Transverse colon (tissue), 4 donors: ENCODE measurements at regions of chr16 and their contacts with region 1.

Region 1: DNA sequence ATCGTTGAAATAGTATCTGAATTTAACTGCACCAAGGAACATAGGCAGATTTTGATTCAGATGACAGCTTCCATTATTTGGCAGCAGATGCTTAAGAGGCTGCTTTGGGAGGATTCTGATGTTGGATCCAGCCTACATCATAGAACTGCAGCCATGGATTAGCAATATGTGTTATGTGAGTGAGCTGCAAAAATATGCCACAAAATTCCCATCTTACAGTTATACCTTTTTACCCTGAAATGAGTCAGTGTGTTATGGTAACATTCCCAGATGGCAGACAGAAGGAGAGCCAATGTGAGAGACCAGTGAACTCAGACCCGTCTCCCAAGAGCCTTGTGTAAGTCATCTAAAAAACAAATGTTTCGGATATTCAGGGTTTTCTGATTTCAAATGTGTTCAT is 206.1 kb downstream of the CDH13 start:
- DNase-seq: no peak
- H3K4me3 ChIP-seq: no peak overlapping the region
- H3K27ac ChIP-seq: no peak overlapping the region
- H3K4me1 ChIP-seq: no peaks in the 10 kb centered on the region
- H3K27me3 ChIP-seq: no peaks in the 10 kb centered on the region
- CTCF ChIP-seq: no peak
- EP300 ChIP-seq: no peak
- POLR2A ChIP-seq: no peak

Region 2: DNA sequence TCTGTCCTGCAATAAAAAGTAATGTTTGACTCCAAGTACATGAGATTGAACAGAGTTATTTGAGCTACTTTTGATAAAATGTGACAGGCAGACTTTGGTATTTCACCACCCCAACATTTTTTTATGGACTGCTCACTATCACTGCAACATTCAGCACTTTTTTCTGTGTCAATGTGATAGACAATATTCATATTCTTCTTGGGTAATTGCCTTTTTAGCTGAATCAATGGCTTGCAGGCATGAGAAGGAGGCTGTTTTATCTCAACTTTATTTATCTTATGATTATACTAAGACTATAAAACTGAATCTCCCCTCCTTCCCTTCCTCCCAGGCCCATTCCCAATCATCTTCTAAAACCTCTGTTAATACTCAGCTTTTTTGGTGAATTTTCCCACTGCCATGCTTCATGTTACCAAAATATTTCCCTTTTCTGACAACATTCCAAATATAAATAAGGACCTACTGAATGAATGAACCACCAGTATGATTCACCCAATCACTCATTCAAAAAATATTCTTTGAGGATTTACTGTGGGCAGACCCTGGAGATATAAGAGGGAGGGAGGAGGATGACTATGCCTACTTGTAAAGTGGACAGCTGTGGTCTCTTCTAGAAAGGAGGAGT is 138.5 kb before region 1 on chr16:
- in situ Hi-C with region 1: no loop called
- intact Hi-C with region 1: no loop called
- DNase-seq: no peak
- H3K4me3 ChIP-seq: no peak overlapping the region
- H3K27ac ChIP-seq: no peak overlapping the region
- H3K4me1 ChIP-seq: peaks cover 0 to 8% (median 0%) of the 10 kb centered on the region in 4 donors
- H3K27me3 ChIP-seq: no peaks in the 10 kb centered on the region
- CTCF ChIP-seq: no peak
- EP300 ChIP-seq: no peak
- POLR2A ChIP-seq: no peak

Region 3: DNA sequence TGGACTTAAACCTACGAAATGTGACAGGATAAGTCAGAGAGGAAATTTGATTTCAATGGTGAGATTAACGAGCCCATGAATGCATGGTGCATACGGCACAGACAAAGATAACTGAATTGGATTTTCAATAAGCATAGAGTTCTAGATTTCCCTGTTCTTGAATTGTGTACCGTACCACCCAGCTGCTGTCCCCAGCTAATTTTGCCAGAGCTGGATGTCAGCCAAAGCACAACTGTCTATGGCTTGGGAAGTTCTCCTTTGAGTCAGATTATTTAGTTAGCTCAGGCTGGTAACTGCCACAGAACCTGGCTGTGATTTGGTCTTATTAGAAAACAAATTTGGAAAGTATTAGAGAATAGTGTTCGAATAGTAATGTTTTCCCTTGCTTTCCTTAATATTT is 63.0 kb before region 1 on chr16:
- in situ Hi-C with region 1: no loop called
- intact Hi-C with region 1: no loop called
- DNase-seq: no peak
- H3K4me3 ChIP-seq: no peak overlapping the region
- H3K27ac ChIP-seq: no peak overlapping the region
- H3K4me1 ChIP-seq: no peaks in the 10 kb centered on the region
- H3K27me3 ChIP-seq: no peaks in the 10 kb centered on the region
- CTCF ChIP-seq: no peak
- EP300 ChIP-seq: no peak
- POLR2A ChIP-seq: no peak

Region 4: DNA sequence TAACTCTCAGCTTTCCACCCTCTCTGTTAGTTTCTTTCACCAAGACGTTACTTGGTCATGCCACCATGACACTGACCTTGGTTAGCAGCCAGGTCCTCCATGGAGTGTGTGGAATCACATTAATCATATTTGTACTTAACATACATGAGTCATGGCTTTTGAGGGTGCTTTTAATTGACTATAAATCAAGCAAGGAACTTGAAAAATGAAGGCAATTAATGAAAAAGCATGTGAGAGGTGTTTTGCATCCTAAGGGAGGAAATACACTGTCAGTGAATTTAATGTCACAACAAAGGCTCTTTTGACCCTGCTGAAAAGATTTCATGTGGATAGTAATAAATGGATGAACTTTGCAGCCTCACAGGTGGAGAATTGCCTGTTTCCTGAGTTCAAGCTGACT is 34.7 kb after region 1 on chr16:
- in situ Hi-C with region 1: no loop called
- intact Hi-C with region 1: no loop called
- DNase-seq: no peak
- H3K4me3 ChIP-seq: no peak overlapping the region
- H3K27ac ChIP-seq: no peak overlapping the region
- H3K4me1 ChIP-seq: peaks cover 0 to 3% (median 0%) of the 10 kb centered on the region in 4 donors
- H3K27me3 ChIP-seq: no peaks in the 10 kb centered on the region
- CTCF ChIP-seq: no peak
- EP300 ChIP-seq: no peak
- POLR2A ChIP-seq: no peak

Region 5: DNA sequence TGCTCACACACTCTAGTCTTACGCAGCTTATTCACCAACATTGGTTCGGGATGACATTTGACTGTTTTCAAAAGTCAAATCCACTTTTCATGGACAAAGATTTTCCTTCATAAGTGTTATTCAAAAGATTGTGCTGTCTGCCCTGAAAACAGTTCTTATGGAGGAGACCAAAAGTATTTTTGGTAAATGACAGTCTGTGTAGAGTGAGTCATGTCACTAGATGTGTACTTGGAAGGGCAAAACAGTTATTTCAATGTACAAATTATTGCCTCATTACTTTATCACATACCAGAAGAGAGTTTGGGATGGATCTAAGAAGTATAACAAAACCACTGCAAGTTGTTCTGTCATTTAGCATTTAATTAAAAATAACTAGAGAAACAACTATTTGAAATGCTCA is 59.5 kb after region 1 on chr16:
- in situ Hi-C with region 1: no loop called
- intact Hi-C with region 1: loop called (anchors 10 kb)
- DNase-seq: no peak
- H3K4me3 ChIP-seq: no peak overlapping the region
- H3K27ac ChIP-seq: no peak overlapping the region
- H3K4me1 ChIP-seq: peaks cover 0 to 7% (median 0%) of the 10 kb centered on the region in 4 donors
- H3K27me3 ChIP-seq: no peaks in the 10 kb centered on the region
- CTCF ChIP-seq: no peak
- EP300 ChIP-seq: no peak
- POLR2A ChIP-seq: no peak